ENCODE measurements at regions of chr1 and their contacts with region 1.

Region 1: GRCh38 chr1:17502326-17502778 is 37.1 kb upstream of the ARHGEF10L start:
- DNase-seq: peak; percentile 66
- H3K4me3 Mint-ChIP-seq: no peak overlapping the region
- H3K27ac Mint-ChIP-seq: no peak overlapping the region
- H3K4me1 Mint-ChIP-seq: no peaks in the 10 kb centered on the region
- H3K27me3 Mint-ChIP-seq: peaks cover 7% of the 10 kb centered on the region

Region 2: DNA sequence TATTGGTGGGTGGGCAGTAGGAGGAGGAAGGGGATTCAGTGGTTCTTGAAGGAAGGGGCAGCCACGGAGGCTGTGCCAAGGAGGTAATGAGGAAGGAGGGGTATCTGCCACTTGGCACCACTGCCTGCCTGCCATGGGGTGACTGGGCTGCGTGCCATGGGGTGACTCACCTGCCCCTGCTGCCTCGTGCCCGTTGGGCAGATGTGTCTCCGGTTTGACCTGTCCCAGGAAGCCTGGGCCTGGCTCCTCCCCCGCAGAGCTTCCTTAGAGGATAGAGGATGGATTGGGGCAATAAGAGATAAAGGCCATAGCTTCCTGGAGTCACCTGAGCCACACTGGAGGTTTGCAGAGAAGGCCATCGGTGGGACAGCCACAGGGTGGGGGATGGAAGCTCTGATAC is 251.8 kb before region 1 on chr1:
- CTCF ChIA-PET with region 1: no interaction called
- POLR2A ChIA-PET with region 1: no interaction called
- DNase-seq: no peak
- H3K4me3 Mint-ChIP-seq: no peak overlapping the region
- H3K27ac Mint-ChIP-seq: no peak overlapping the region
- H3K4me1 Mint-ChIP-seq: no peaks in the 10 kb centered on the region
- H3K27me3 Mint-ChIP-seq: no peaks in the 10 kb centered on the region

Region 3: GRCh38 chr1:17606826-17607440 is 104.6 kb after region 1 on chr1:
- CTCF ChIA-PET with region 1: interaction called, 33 read pairs
- POLR2A ChIA-PET with region 1: no interaction called
- DNase-seq: peak; percentile 55
- H3K4me3 Mint-ChIP-seq: no peak overlapping the region
- H3K27ac Mint-ChIP-seq: no peak overlapping the region
- H3K4me1 Mint-ChIP-seq: no peaks in the 10 kb centered on the region
- H3K27me3 Mint-ChIP-seq: peaks cover 1% of the 10 kb centered on the region

Measured in activated CD4-positive, alpha-beta memory T cell treated with anti-CD3 and anti-CD28 coated beads, Interleukin-2, amount 10 ng/mL, durations not matched to agents 7 days and 5 days (primary cell).